Activated CD8-positive, alpha-beta memory T cell treated with anti-CD3 and anti-CD28 coated beads, Interleukin-2, amount 10 ng/mL, durations not matched to agents 7 days and 5 days (primary cell): ENCODE measurements at regions of chr7 and their contacts with region 1.

Region 1: DNA sequence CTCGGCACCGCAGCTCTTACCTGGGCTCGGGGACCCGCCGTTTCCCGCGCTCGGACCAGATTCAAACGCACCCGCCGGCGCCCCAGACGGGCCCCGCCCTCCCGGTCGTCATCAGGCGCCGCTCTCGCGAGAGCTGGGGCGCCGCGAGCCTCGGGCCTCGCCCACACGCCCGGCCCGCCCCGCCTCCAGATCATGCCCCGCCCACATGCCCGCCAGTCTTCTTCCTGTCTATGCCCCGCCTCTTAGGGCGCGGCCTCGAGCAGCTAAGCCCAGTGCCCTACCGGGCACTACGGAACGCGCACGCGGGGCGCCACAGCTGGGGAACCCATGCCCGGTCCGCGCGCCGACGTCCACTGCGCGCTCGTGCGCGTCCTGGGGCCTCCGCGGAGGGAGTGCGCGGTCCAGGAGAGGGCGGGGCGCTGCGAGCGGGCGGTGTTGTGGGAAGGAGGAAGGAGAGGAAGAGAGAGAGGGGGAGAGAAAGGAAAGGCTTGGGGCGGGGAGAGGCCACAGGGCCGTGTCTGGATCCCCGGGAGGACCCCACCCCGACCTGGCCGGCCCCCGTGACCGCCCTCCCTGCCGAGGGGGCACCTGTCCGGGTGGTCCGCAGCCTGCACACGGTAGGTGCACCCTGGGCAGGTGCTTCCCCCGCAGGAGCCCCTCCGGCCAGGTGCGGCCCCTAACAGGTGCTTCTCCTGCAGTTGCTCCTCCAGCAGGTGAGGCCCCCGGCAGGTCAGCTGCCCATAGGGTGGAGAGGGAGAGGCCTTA is at the start of gene NCAPG2:
- DNase-seq: peak; percentile 98
- ATAC-seq: peak; percentile 97
- H3K4me3 Mint-ChIP-seq: peak within 1 kb of the TSS; percentile 81
- H3K27ac Mint-ChIP-seq: peak within 1 kb of the TSS; percentile 89
- H3K4me1 Mint-ChIP-seq: peaks cover 48% of the 10 kb centered on the region
- H3K27me3 Mint-ChIP-seq: no peaks in the 10 kb centered on the region
- total RNA-seq, gene NCAPG2: 146 to 182 TPM

Region 2: GRCh38 chr7:158863611-158864506 is 159.0 kb after region 1 on chr7:
- CTCF ChIA-PET with region 1: interaction called, 10 read pairs
- DNase-seq: peak; percentile 64
- ATAC-seq: peak; percentile 68
- H3K4me3 Mint-ChIP-seq: peak overlapping the region; percentile 72
- H3K27ac Mint-ChIP-seq: peak overlapping the region; percentile 85
- H3K4me1 Mint-ChIP-seq: peaks cover 45% of the 10 kb centered on the region
- H3K27me3 Mint-ChIP-seq: no peaks in the 10 kb centered on the region